CD14-positive monocyte (primary cell): ENCODE measurements at regions of chr6 and their contacts with region 1.

Region 1: DNA sequence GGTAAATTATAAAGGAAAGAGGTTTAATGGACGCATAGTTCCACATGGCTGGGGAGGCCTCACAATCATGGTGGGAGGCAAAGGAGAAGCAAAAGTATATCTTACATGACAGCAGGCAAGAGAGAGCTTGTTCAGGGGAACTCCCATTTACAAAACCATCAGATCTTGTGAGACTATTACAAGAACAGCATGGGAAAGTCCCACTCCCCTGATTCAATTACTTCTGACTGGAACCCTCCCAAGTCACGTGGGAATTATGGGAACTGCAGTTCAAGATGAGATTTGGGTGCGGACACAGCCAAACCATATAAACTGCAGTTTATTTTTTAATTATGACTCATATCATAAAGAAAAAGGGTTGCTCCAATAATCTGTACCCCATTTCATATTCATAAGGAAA is 22.3 kb upstream of the HLA-DQA2 start:
- DNase-seq: peak in 1 of 3 donors; percentile 66
- H3K4me3 ChIP-seq: no peak overlapping the region
- H3K4me3 Mint-ChIP-seq: no peak overlapping the region
- H3K27ac ChIP-seq: no peak overlapping the region
- H3K27ac Mint-ChIP-seq: peak overlapping the region in 1 of 7 donors; percentile 46
- H3K4me1 ChIP-seq: no peaks in the 10 kb centered on the region
- H3K4me1 Mint-ChIP-seq: peaks cover 5% of the 10 kb centered on the region
- H3K27me3 ChIP-seq: no peaks in the 10 kb centered on the region
- H3K27me3 Mint-ChIP-seq: peaks cover 6 to 8% (median 7%) of the 10 kb centered on the region in 3 donors
- CTCF ChIP-seq: no peak

Region 2: GRCh38 chr6:32759669-32760068 is 40.8 kb after region 1 on chr6:
- intact Hi-C with region 1: loop called in 1 of 2 experiments (anchors 5 kb)
- DNase-seq: no peak
- H3K4me3 ChIP-seq: no peak overlapping the region
- H3K4me3 Mint-ChIP-seq: no peak overlapping the region
- H3K27ac ChIP-seq: no peak overlapping the region
- H3K27ac Mint-ChIP-seq: no peak overlapping the region
- H3K4me1 ChIP-seq: peaks cover 4 to 17% of the 10 kb centered on the region in 2 donors
- H3K4me1 Mint-ChIP-seq: peaks cover 20% of the 10 kb centered on the region
- H3K27me3 ChIP-seq: peaks cover 5 to 14% of the 10 kb centered on the region in 2 donors
- H3K27me3 Mint-ChIP-seq: peaks cover 22 to 34% (median 29%) of the 10 kb centered on the region in 3 donors
- CTCF ChIP-seq: no peak